Lower lobe of right lung (tissue), 2 donors: ENCODE measurements at regions of chr2 and their contacts with region 1.

Region 1: GRCh38 chr2:130873700-130874346 is 37.1 kb downstream of the ARHGEF4 start:
- DNase-seq: peak; percentile 58
- ATAC-seq: peak; percentile 62 to 78
- H3K4me3 ChIP-seq: no peak overlapping the region
- H3K27ac ChIP-seq: no peak overlapping the region
- H3K4me1 ChIP-seq: no peaks in the 10 kb centered on the region
- H3K27me3 ChIP-seq: peaks cover 5% of the 10 kb centered on the region
- CTCF ChIP-seq: peak; percentile 61

Region 2: DNA sequence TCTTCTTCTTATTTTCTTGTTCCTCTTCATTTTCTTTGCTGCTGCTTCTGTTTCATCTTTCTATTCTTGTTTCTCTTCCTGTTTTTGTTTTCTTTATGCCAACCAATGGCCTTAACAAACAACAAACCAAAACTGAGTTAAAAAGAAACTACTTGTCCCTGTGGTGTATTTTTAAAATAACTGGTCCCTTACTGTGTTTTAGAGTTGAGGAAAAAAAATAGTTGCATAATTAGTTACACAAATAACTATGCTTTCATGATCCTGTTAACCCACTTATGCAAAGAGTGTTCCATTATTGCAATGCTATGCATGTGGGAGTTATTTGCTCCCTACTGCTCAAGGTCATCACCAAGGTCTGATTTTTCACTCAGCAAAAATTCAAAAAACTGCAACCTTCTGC is 570.7 kb before region 1 on chr2:
- intact Hi-C with region 1: no loop called
- DNase-seq: no peak
- ATAC-seq: no peak
- H3K4me3 ChIP-seq: no peak overlapping the region
- H3K27ac ChIP-seq: no peak overlapping the region
- H3K4me1 ChIP-seq: no peaks in the 10 kb centered on the region
- H3K27me3 ChIP-seq: peaks cover 11% of the 10 kb centered on the region
- CTCF ChIP-seq: no peak

Region 3: GRCh38 chr2:130797493-130798435 is 76.1 kb before region 1 on chr2:
- intact Hi-C with region 1: loop called (anchors 10 kb)
- DNase-seq: peak; percentile 93
- ATAC-seq: peak; percentile 98
- H3K4me3 ChIP-seq: peak overlapping the region; percentile 76
- H3K27ac ChIP-seq: peak overlapping the region; percentile 93
- H3K4me1 ChIP-seq: peaks cover 11% of the 10 kb centered on the region
- H3K27me3 ChIP-seq: peaks cover 9% of the 10 kb centered on the region
- CTCF ChIP-seq: peak; percentile 81